Activated CD8-positive, alpha-beta T cell treated with anti-CD3 and anti-CD28 coated beads for 36 hours (primary cell): ENCODE measurements at regions of chr3 and their contacts with region 1.

Region 1: DNA sequence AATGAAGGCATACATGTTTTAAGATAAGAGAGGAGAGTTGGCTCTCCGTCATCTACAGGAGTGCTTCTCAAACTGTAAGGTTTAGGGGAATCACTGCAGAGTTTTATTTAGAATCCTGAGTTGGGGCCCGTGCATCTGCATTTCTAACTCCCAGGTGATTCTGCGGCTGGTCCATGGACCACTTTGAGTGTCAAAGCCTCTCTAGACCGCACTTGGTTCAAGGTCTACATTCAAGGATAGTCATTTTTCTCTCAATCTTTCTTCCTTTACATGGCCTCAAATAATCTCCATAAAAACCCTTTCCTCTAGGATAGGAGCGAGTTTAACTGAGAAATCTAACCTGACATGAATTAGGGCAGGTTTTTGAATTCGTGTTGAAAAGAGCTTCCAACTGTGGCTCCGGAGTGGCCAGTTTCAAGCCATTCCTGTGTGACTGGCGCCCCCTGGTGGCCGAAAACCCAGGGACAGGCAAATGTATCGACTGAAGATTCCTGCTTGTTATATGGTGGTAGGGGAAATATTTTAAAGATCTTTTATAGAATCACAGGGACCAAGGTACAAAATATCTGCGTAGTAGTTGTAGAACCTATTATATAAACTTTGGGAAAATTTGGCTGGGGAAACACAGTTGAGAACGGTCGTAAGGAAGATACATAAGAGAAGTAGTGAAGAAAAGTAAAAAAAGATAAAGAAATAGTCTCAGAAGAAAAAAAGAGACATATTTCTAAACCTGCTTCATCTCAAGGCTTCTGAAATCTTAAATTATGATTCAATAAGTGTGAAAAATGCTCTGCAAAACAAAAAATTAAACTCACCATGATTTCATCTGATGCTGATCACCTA is 11.9 kb downstream of the GABRR3 start:
- DNase-seq: peak; percentile 96
- ATAC-seq: peak; percentile 89
- H3K4me3 Mint-ChIP-seq: no peak overlapping the region
- H3K27ac Mint-ChIP-seq: no peak overlapping the region
- H3K4me1 Mint-ChIP-seq: peaks cover 1% of the 10 kb centered on the region
- H3K27me3 Mint-ChIP-seq: peaks cover 3% of the 10 kb centered on the region
- CTCF ChIP-seq: peak; percentile 91

Region 2: DNA sequence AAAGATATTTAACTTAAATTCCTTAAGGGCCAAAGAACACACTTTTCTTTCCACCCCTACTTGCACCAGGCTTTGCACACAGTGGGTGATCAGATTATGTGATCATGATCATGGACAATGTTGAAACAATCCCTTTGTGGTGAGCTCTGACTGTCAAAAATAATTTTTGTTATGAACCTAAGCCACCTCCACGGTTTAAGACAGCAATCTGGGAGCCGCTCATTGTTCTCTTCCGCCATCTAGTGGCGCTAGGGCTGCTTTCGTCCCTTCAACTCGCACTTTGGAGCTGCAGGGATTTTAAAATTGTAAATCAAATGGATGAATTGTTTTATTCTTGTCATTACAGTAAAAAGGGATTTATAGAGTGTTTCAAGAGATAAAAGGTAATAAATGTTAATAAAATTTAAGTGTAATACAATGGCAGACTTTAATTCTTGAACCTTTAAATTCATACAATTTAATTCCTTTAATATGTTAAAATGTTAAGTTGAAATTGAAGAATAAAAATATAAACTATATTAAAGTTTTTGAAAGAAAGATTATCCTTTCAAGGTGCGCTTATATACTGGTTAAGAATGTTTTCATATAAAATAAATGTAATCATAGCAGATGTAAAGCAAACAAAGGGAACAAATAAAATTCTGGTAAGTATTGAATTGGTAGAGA is 303.9 kb before region 1 on chr3:
- CTCF ChIA-PET with region 1: interaction called, 15 read pairs
- POLR2A ChIA-PET with region 1: no interaction called
- intact Hi-C with region 1: no loop called
- DNase-seq: peak; percentile 79
- ATAC-seq: peak; percentile 84
- H3K4me3 Mint-ChIP-seq: no peak overlapping the region
- H3K27ac Mint-ChIP-seq: no peak overlapping the region
- H3K4me1 Mint-ChIP-seq: no peaks in the 10 kb centered on the region
- H3K27me3 Mint-ChIP-seq: peaks cover 3% of the 10 kb centered on the region
- CTCF ChIP-seq: peak; percentile 88

Region 3: DNA sequence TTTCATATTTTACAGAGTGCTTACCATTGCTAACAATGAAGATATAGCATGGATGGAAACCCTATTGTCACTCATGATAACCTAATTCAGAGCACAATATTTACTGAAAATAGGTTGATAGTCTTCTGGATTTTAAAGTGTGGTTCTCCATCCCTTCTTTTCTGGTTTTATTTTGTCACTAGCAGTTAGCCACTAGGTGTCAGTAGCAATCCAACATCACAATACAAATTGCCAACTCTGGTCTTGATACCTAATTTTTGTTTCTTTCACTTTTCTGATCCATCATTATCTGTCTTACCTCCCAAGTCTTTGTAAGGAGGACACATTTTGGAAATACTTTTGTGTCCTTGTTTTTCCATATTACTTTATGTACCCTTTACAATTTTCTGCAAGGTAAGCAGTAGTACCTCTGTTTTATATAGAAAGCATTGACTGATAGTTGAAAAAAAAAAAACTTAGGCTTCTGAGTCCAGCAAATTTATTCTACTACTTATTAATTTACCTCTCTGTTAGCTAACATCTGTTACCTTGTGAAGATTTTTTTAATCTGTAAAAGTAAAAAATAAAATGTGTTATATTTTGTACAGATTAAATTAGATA is 229.7 kb before region 1 on chr3:
- CTCF ChIA-PET with region 1: interaction called, 85 read pairs
- POLR2A ChIA-PET with region 1: no interaction called
- intact Hi-C with region 1: loop called (anchors 1 kb)
- DNase-seq: peak; percentile 2
- ATAC-seq: peak; percentile 39
- H3K4me3 Mint-ChIP-seq: no peak overlapping the region
- H3K27ac Mint-ChIP-seq: no peak overlapping the region
- H3K4me1 Mint-ChIP-seq: no peaks in the 10 kb centered on the region
- H3K27me3 Mint-ChIP-seq: no peaks in the 10 kb centered on the region
- CTCF ChIP-seq: peak; percentile 86

Region 4: GRCh38 chr3:97821810-97822775 is 201.1 kb before region 1 on chr3 and contains the start of gene CRYBG3:
- CTCF ChIA-PET with region 1: interaction called, 20 read pairs
- POLR2A ChIA-PET with region 1: no interaction called
- intact Hi-C with region 1: no loop called
- DNase-seq: peak; percentile 83
- ATAC-seq: peak; percentile 99
- H3K4me3 Mint-ChIP-seq: peak within 1 kb of the TSS; percentile 91
- H3K27ac Mint-ChIP-seq: peak within 1 kb of the TSS; percentile 78
- H3K4me1 Mint-ChIP-seq: peaks cover 17% of the 10 kb centered on the region
- H3K27me3 Mint-ChIP-seq: peaks cover 20% of the 10 kb centered on the region
- CTCF ChIP-seq: no peak
- total RNA-seq, gene CRYBG3: 4.3 to 4.9 TPM

Region 5: GRCh38 chr3:97952280-97952679 is 70.9 kb before region 1 on chr3:
- CTCF ChIA-PET with region 1: interaction called, 21 read pairs
- POLR2A ChIA-PET with region 1: no interaction called
- intact Hi-C with region 1: loop called (anchors 5 kb)
- DNase-seq: no peak
- ATAC-seq: no peak
- H3K4me3 Mint-ChIP-seq: no peak overlapping the region
- H3K27ac Mint-ChIP-seq: no peak overlapping the region
- H3K4me1 Mint-ChIP-seq: no peaks in the 10 kb centered on the region
- H3K27me3 Mint-ChIP-seq: no peaks in the 10 kb centered on the region
- CTCF ChIP-seq: no peak